Motor neuron (in vitro differentiated cells): ENCODE measurements at regions of chr1 and their contacts with region 1.

Region 1: GRCh38 chr1:246837418-246838117 is 94.2 kb downstream of the AHCTF1 start:
- ATAC-seq: peak in 1 of 8 experiments; percentile 10
- H3K4me3 ChIP-seq: no peak overlapping the region
- H3K27ac ChIP-seq: no peak overlapping the region
- H3K4me1 ChIP-seq: peaks cover 0 to 5% of the 10 kb centered on the region in 2 donors

Region 2: DNA sequence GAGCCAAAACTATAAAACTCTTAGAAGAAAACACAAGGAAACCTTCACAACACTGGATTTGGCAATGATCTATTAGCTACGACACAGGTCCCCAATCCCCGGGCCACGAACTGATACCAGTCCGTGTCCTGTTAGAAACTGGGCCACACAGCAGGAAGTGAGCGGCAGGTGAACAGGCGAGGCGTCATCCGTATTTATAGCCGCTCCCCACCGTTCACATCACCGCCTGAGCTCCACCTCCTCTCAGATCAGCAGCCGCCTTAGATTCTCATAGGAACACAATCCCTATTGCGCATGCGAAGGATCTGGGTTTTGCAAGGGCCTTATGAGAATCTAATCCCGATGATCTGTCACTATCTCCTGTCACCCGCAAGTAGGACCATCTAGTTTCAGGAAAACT is 283.4 kb before region 1 on chr1:
- in situ Hi-C with region 1: no loop called
- ATAC-seq: no peak
- H3K4me3 ChIP-seq: no peak overlapping the region
- H3K27ac ChIP-seq: no peak overlapping the region
- H3K4me1 ChIP-seq: no peaks in the 10 kb centered on the region

Region 3: GRCh38 chr1:246632281-246633087 is 205.1 kb before region 1 on chr1:
- in situ Hi-C with region 1: no loop called
- ATAC-seq: peak in 7 of 8 experiments; percentile 54 to 94 (median 85)
- H3K4me3 ChIP-seq: no peak overlapping the region
- H3K27ac ChIP-seq: peak overlapping the region in 1 of 2 donors; percentile 5
- H3K4me1 ChIP-seq: peaks cover 5% of the 10 kb centered on the region in 2 donors

Region 4: GRCh38 chr1:246931549-246932365 is 94.2 kb after region 1 on chr1 and contains the start of gene AHCTF1:
- in situ Hi-C with region 1: loop called in 1 of 9 experiments (anchors 25 kb)
- ATAC-seq: peak; percentile 92 to 95 (median 94)
- H3K4me3 ChIP-seq: peak within 1 kb of the TSS; percentile 52 to 77 (median 63)
- H3K27ac ChIP-seq: peak within 1 kb of the TSS; percentile 88 to 94
- H3K4me1 ChIP-seq: peaks cover 5 to 9% of the 10 kb centered on the region in 2 donors
- total RNA-seq, gene AHCTF1: 25.6 to 50.4 (median 32.5) TPM

Region 5: GRCh38 chr1:246978281-246978680 is 140.7 kb after region 1 on chr1:
- in situ Hi-C with region 1: no loop called
- ATAC-seq: no peak
- H3K4me3 ChIP-seq: no peak overlapping the region
- H3K27ac ChIP-seq: no peak overlapping the region
- H3K4me1 ChIP-seq: no peaks in the 10 kb centered on the region